Activated T-helper 1 cell treated with anti-CD3 and anti-CD28 coated beads, Interleukin-12 subunit alpha, Interleukin-12 subunit beta, Interleukin-2, Interleukin-4 antibody, amounts not matched to agents 30 ng/mL and 10 ng/mL and 1 ng/mL, durations not matched to agents 14 hours and 24 hours and 36 hours (primary cell): ENCODE measurements at regions of chr17 and their contacts with region 1.

Region 1: DNA sequence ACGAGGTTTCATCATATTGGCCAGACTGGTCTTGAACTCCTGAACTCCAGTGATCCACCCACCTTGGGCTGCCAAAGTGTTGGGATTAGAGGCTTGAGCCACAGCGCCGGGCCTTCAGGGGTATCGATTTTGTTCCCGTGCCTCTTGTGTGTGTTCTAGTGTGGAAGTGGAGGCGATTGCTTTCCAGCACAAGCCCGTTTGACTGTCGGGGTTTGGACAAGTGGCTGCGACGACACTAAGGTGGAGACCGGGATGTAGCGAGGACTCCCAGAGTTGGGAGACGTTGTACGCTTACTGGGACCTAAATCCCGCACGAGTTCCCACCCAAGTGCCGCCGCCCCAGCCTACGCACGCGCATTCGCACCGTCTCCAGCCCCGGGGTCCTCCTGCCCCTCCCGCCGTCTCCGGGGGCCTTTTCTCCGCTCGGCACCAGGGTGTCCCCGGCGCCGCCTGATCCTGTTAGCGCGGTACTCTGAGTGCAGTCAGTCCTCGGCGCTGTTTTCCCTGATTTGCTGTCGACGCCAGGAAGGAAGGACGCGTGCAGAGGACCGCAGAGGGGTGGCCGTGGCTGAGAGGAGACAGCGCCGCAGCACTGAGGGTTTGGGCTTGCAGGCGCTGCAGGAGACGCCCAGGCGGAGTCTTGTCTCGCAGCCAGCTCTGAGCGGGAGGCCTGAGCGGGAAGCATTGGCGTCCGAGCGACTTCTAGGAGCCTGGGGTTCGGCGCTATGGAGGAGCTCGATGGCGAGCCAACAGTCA is at the start of gene NUP85:
- DNase-seq: peak; percentile 89
- H3K4me3 Mint-ChIP-seq: peak within 1 kb of the TSS; percentile 98
- H3K27ac Mint-ChIP-seq: peak within 1 kb of the TSS; percentile 99
- H3K4me1 Mint-ChIP-seq: peaks cover 23% of the 10 kb centered on the region
- H3K27me3 Mint-ChIP-seq: no peaks in the 10 kb centered on the region
- total RNA-seq, gene NUP85: 122 and 129 TPM in 2 replicates

Region 2: GRCh38 chr17:74987418-74987908 is 217.8 kb before region 1 on chr17 and contains the start of gene CDR2L:
- intact Hi-C with region 1: loop called (anchors 1 kb)
- DNase-seq: peak; percentile 89
- H3K4me3 Mint-ChIP-seq: peak within 1 kb of the TSS; percentile 83
- H3K27ac Mint-ChIP-seq: no peak within 1 kb of the TSS
- H3K4me1 Mint-ChIP-seq: peaks cover 7% of the 10 kb centered on the region
- H3K27me3 Mint-ChIP-seq: peaks cover 54% of the 10 kb centered on the region
- total RNA-seq, gene CDR2L: 1.1 and 1.3 TPM in 2 replicates

Region 3: GRCh38 chr17:75046582-75047289 is 158.5 kb before region 1 on chr17 and contains the starts of genes ATP5PD and KCTD2:
- intact Hi-C with region 1: loop called (anchors 5 kb)
- DNase-seq: peak; percentile 93
- H3K4me3 Mint-ChIP-seq: peak within 1 kb of the TSS; percentile 100
- H3K27ac Mint-ChIP-seq: peak within 1 kb of the TSS; percentile 98
- H3K4me1 Mint-ChIP-seq: peaks cover 35% of the 10 kb centered on the region
- H3K27me3 Mint-ChIP-seq: no peaks in the 10 kb centered on the region
- total RNA-seq, gene ATP5PD: 152 and 165 TPM in 2 replicates
- total RNA-seq, gene KCTD2: 21.2 and 22.6 TPM in 2 replicates

Region 4: GRCh38 chr17:75173526-75173925 is 31.7 kb before region 1 on chr17:
- intact Hi-C with region 1: loop called (anchors 1 kb)
- DNase-seq: no peak
- H3K4me3 Mint-ChIP-seq: no peak overlapping the region
- H3K27ac Mint-ChIP-seq: no peak overlapping the region
- H3K4me1 Mint-ChIP-seq: peaks cover 20% of the 10 kb centered on the region
- H3K27me3 Mint-ChIP-seq: no peaks in the 10 kb centered on the region

Region 5: GRCh38 chr17:75188614-75189013 is 16.6 kb before region 1 on chr17:
- intact Hi-C with region 1: loop called (anchors 1 kb)
- DNase-seq: no peak
- H3K4me3 Mint-ChIP-seq: no peak overlapping the region
- H3K27ac Mint-ChIP-seq: no peak overlapping the region
- H3K4me1 Mint-ChIP-seq: peaks cover 19% of the 10 kb centered on the region
- H3K27me3 Mint-ChIP-seq: no peaks in the 10 kb centered on the region

Region 6: DNA sequence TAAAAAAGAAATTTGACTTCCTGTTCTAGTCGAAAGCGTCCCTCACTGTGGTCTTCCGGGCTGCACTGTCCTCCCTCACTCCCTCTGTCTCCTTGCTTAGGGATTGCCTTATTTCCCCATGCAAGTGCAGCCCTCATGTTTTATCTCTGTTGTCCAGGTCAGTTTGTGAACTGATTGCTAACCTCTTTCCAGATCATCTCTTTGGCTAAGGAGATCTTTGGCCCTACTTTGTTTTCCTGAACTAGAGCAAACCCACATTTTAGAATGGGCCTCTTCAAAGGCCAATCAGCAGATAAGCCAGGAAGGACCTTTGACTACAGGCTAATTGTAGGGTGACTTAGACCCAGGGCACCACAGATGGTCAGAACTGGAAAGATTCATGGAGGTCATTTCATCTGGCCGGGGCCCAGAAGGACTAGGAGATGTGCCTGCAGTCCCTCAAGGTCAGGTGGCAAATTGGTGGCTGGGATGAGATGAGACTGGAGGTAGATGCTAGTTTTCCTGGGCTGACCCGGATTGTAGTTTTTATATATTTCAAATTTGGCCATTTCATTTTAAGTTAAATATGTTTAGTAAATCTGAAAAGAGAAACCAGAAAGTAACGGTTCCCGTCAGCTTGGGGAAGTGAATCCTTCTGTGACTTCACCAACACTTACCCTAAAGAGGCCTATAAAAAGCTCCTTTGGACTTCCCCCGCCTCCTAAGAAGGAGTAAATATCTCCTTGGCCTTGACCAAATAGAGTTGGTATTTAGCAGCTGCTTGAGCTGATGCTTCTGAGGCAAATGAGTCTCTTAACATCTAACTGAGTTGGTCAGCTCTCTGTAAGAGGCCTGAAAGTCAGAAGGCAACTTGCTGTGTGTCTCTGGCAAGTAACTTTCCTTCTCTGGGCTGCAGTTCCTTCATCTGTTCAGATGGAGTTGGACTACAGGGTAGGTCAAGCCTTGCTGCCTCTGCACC is 90.3 kb after region 1 on chr17:
- intact Hi-C with region 1: no loop called
- DNase-seq: peak; percentile 49
- H3K4me3 Mint-ChIP-seq: peak overlapping the region; percentile 49
- H3K27ac Mint-ChIP-seq: peak overlapping the region; percentile 96
- H3K4me1 Mint-ChIP-seq: peaks cover 24% of the 10 kb centered on the region
- H3K27me3 Mint-ChIP-seq: no peaks in the 10 kb centered on the region

Region 7: GRCh38 chr17:75440738-75441448 is 235.7 kb after region 1 on chr17:
- intact Hi-C with region 1: no loop called
- DNase-seq: no peak
- H3K4me3 Mint-ChIP-seq: no peak overlapping the region
- H3K27ac Mint-ChIP-seq: no peak overlapping the region
- H3K4me1 Mint-ChIP-seq: peaks cover 4% of the 10 kb centered on the region
- H3K27me3 Mint-ChIP-seq: peaks cover 3% of the 10 kb centered on the region